MCF 10A (cell line): ENCODE measurements at regions of chr4 and their contacts with region 1.

Region 1: GRCh38 chr4:139167774-139168444 is 9.1 kb downstream of the ELF2 start:
- DNase-seq: peak; percentile 87
- H3K4me3 Mint-ChIP-seq: no peak overlapping the region
- H3K27ac Mint-ChIP-seq: peak overlapping the region; percentile 27
- H3K4me1 Mint-ChIP-seq: peaks cover 30% of the 10 kb centered on the region
- H3K27me3 Mint-ChIP-seq: no peaks in the 10 kb centered on the region
- CTCF ChIP-seq: peak; percentile 57

Region 2: DNA sequence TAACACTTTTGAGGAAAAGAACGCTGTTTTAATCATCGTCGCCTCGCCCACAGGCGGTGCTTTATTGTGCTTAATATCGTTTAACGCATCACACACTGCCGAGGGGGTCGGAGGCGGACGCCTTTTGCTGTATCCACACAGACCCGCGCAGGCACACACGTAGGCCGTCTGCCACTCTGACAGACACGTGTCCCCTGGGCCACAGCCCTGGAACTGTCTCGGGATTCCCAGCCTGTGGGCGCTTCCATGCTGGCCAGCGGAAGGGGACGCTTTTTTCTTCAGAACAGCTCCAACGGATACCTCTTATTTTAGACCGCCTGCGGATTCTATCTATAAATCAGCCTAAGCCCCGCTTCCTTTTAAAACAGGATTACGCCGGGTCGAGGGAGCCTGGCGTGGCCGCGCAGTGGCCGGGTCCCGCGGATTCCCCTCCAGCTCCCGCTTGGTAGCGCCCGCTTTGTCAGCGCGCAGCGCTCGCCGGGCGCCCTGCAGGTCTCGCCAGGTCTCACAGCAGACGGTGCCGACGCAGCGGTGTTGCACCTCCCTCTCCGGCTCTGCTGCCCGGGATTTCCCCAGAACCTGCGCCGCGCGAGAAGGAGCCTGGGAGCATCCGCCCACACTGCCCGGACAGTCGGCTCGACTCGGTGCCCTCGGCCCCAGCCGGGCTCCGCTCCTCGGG is 152.5 kb before region 1 on chr4 and contains the start of gene NOCT:
- CTCF ChIA-PET with region 1: no interaction called
- POLR2A ChIA-PET with region 1: interaction called, 10 read pairs
- intact Hi-C with region 1: loop called (anchors 5 kb)
- DNase-seq: peak; percentile 94
- H3K4me3 Mint-ChIP-seq: peak within 1 kb of the TSS; percentile 72
- H3K27ac Mint-ChIP-seq: peak within 1 kb of the TSS; percentile 95
- H3K4me1 Mint-ChIP-seq: peaks cover 38% of the 10 kb centered on the region
- H3K27me3 Mint-ChIP-seq: no peaks in the 10 kb centered on the region
- CTCF ChIP-seq: no peak
- total RNA-seq, gene NOCT: 16.5 and 25.5 TPM in 2 replicates

Region 3: DNA sequence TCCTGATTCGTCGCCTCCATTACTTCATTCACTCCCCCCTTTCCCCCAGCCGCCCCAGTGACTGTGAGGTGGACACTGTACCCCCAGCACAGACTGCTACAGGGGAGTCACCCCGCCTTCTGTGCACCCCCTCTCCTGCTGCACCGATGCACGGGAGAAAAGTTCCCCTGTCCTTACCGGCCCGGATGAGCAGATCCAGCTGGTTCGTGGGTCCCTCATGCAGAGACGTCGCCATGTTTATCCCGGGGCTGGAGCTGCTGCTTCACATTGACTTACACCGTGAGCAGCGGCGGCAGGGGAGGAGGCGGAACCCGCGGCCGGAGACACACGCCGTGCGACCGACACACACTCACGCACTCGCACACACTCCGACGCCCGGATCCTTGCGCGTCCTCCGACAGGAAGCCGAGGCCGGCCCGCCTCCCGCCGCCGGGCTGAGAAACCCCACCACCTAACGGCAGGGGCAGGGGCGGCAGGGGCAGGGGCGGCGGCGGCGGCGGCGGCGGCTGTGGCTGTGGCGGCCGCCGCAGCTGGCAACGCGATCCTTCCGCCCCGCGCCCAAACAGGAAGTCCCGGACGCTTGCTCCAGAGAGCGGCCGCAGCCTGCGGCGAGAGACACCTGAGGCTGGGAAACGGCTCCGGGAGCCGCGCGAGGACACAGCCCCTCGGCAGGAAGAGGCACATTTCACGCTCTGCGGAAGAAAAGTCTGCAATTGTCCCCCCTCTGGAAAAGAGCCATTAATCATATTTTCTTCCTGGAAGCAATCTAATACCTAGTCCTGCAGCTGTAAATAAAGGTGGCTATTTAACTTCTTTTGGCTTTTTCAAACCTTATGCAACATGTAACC is 83.7 kb before region 1 on chr4:
- CTCF ChIA-PET with region 1: interaction called, 4 read pairs
- POLR2A ChIA-PET with region 1: interaction called, 20 read pairs
- intact Hi-C with region 1: no loop called
- DNase-seq: peak; percentile 91
- H3K4me3 Mint-ChIP-seq: peak overlapping the region; percentile 97
- H3K27ac Mint-ChIP-seq: peak overlapping the region; percentile 95
- H3K4me1 Mint-ChIP-seq: peaks cover 15% of the 10 kb centered on the region
- H3K27me3 Mint-ChIP-seq: no peaks in the 10 kb centered on the region
- CTCF ChIP-seq: no peak

Region 4: GRCh38 chr4:139099366-139099982 is 68.4 kb before region 1 on chr4:
- CTCF ChIA-PET with region 1: interaction called, 38 read pairs
- POLR2A ChIA-PET with region 1: interaction called, 34 read pairs
- intact Hi-C with region 1: loop called (anchors 1 kb)
- DNase-seq: peak; percentile 92
- H3K4me3 Mint-ChIP-seq: no peak overlapping the region
- H3K27ac Mint-ChIP-seq: no peak overlapping the region
- H3K4me1 Mint-ChIP-seq: peaks cover 6% of the 10 kb centered on the region
- H3K27me3 Mint-ChIP-seq: no peaks in the 10 kb centered on the region
- CTCF ChIP-seq: peak; percentile 80

Region 5: GRCh38 chr4:139108567-139109128 is 59.3 kb before region 1 on chr4:
- CTCF ChIA-PET with region 1: interaction called, 37 read pairs
- POLR2A ChIA-PET with region 1: interaction called, 3 read pairs
- intact Hi-C with region 1: no loop called
- DNase-seq: no peak
- H3K4me3 Mint-ChIP-seq: no peak overlapping the region
- H3K27ac Mint-ChIP-seq: no peak overlapping the region
- H3K4me1 Mint-ChIP-seq: no peaks in the 10 kb centered on the region
- H3K27me3 Mint-ChIP-seq: no peaks in the 10 kb centered on the region
- CTCF ChIP-seq: no peak

Region 6: GRCh38 chr4:139153420-139154133 is 14.3 kb before region 1 on chr4:
- CTCF ChIA-PET with region 1: interaction called, 15 read pairs
- POLR2A ChIA-PET with region 1: interaction called, 8 read pairs
- intact Hi-C with region 1: no loop called
- DNase-seq: no peak
- H3K4me3 Mint-ChIP-seq: no peak overlapping the region
- H3K27ac Mint-ChIP-seq: peak overlapping the region; percentile 46
- H3K4me1 Mint-ChIP-seq: peaks cover 7% of the 10 kb centered on the region
- H3K27me3 Mint-ChIP-seq: no peaks in the 10 kb centered on the region
- CTCF ChIP-seq: no peak

Region 7: DNA sequence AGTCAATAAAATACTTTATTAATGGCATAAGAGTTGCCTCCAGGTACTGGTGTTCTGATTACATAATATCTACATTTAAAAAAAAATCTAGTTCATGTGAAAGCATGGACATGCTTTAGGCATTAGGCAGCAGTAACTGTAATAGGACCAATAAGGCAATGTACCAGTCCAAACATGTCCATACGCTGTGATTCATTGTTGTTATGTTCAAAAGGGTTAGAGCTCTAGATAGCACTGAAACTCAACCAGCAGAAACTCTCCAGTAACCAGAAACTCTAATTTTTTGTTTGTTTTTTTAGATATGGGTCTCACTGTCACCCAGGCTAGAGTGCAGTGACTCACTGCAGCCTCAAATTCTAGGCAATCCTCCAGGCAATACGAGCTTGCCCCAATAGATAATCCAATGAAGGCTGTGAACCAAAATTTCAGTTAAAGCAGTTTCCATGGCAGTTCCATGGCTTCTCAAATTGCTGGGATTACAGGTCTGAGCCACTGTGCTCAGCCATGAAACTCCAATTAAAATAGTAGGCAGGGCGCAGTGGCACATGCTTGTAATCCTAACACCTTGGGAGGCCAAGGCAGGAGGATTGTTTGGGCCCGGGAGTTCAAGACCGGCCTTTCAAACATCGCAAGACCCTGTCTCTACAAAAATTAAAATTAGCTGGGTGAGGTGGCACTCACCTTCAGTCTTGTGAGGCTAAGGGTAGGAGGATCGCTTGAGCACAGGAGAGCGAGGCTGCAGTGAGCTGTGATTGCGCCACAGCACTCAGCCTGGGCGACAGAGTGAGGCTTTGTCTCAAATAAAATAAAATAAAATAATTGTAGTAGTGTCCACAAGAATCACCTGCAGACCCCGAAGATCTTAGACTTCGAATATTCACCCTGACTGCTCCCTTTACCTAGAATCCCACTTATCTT is 75.8 kb after region 1 on chr4:
- CTCF ChIA-PET with region 1: no interaction called
- POLR2A ChIA-PET with region 1: interaction called, 10 read pairs
- intact Hi-C with region 1: no loop called
- DNase-seq: peak; percentile 98
- H3K4me3 Mint-ChIP-seq: no peak overlapping the region
- H3K27ac Mint-ChIP-seq: peak overlapping the region; percentile 93
- H3K4me1 Mint-ChIP-seq: peaks cover 27% of the 10 kb centered on the region
- H3K27me3 Mint-ChIP-seq: no peaks in the 10 kb centered on the region
- CTCF ChIP-seq: no peak